ENCODE measurements at regions of chr15 and their contacts with region 1.

Region 1: GRCh38 chr15:74950078-74951000 is 6.2 kb downstream of the RPP25 start:
- H3K4me3 ChIP-seq: no peak overlapping the region
- H3K27ac ChIP-seq: no peak overlapping the region
- H3K4me1 ChIP-seq: peaks cover 4% of the 10 kb centered on the region; the same call in 1 of the 2 replicates
- CTCF ChIP-seq: peak; percentile 97

Region 2: DNA sequence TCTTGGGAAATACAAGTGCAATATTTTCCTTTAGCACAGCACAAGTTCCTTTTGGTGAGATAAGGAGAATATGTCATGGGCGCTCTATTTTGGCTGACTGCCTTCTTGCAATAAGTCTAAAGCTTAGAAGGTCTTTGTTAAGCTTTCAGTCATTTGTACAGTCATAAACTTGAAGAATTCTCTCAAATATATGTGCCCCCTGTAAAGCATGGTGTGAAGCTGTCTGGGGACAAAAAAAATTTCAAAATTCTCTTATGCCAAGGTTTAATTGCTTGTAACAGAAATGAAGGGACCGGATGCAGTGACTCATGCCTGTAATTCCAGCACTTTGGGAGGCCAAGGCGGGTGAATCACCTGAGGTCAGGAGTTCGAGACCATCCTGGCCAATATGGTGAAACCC is 431.0 kb before region 1 on chr15:
- CTCF ChIA-PET with region 1: no interaction called
- POLR2A ChIA-PET with region 1: no interaction called
- H3K4me3 ChIP-seq: no peak overlapping the region
- H3K27ac ChIP-seq: no peak overlapping the region
- H3K4me1 ChIP-seq: no peaks in the 10 kb centered on the region
- CTCF ChIP-seq: no peak

Region 3: DNA sequence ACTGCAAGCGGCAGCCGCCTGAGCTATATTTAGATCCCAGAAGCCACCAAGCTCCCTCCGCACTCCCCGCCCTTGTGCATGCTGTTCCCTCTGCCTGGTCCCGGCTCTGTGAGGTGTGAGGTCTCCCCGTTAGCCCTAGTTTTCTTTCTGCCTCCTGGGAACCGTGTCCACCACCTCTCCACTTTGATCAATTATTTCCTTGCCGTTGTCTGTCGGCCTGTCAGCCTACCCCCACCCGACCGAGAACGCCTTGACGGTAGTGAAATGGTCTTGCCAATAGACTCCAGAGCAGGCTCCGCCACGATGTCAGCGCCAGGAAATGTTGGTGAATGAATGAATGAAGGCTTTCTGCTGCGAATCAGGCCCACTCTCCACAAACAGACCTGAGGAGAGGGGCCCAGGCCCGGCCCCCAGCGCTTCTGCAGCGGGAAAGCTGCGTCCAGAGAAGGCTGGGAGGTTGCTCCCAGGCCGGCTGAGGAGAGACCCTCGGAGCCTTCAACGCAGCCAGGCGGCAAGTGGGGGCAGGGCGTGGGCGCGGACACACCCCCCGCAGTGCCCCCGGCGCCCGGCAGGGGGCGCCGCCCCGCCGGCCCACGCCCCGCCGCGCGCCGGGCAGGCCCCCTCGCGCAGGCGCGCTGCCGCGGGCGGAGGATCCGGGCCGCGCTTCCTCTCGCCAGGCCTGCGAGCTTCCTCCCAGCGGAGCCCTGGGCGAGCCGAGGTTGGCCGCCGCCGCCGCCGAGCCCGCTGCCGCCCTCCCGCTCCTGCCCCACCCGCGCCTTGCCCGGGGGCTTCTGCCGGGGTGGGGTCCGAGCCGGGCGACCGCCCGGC is 168.7 kb before region 1 on chr15 and contains the start of gene CSK:
- CTCF ChIA-PET with region 1: interaction called, 22 read pairs
- POLR2A ChIA-PET with region 1: interaction called, 6 read pairs
- H3K4me3 ChIP-seq: peak within 1 kb of the TSS; percentile 60
- H3K27ac ChIP-seq: peak within 1 kb of the TSS; percentile 95
- H3K4me1 ChIP-seq: peaks cover 27% of the 10 kb centered on the region
- CTCF ChIP-seq: no peak

Region 4: DNA sequence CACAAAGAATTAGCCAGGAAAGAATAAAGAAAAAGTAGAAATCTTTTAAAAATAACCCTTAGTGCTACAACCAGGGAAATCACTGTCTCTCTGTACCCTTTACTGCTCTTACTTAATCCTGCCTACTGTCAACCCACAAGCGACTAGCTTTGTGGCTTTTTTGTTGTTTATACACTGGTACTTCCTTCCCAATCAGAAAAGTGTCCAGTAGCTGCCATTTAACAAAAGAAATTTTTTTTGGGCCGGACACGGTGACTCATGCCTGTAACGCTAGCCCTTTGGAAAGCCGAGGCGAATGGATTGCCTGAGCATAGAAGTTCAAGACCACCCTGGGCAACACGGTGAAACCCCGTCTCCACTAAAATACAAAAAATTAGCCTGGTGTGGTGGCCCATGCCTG is 29.9 kb before region 1 on chr15:
- CTCF ChIA-PET with region 1: interaction called, 14 read pairs
- POLR2A ChIA-PET with region 1: no interaction called
- H3K4me3 ChIP-seq: no peak overlapping the region
- H3K27ac ChIP-seq: no peak overlapping the region
- H3K4me1 ChIP-seq: no peaks in the 10 kb centered on the region
- CTCF ChIP-seq: no peak

Region 5: GRCh38 chr15:74937596-74938296 is 12.6 kb before region 1 on chr15 and contains the start of gene COX5A:
- CTCF ChIA-PET with region 1: interaction called, 13 read pairs
- POLR2A ChIA-PET with region 1: interaction called, 13 read pairs
- H3K4me3 ChIP-seq: peak within 1 kb of the TSS; percentile 87
- H3K27ac ChIP-seq: peak within 1 kb of the TSS; percentile 94
- H3K4me1 ChIP-seq: peaks cover 7% of the 10 kb centered on the region
- CTCF ChIP-seq: peak; percentile 87

Region 6: GRCh38 chr15:75420698-75421097 is 470.4 kb after region 1 on chr15:
- CTCF ChIA-PET with region 1: no interaction called
- POLR2A ChIA-PET with region 1: no interaction called
- H3K4me3 ChIP-seq: no peak overlapping the region
- H3K27ac ChIP-seq: no peak overlapping the region
- H3K4me1 ChIP-seq: no peaks in the 10 kb centered on the region
- CTCF ChIP-seq: no peak